Ascending aorta (tissue), 2 donors: ENCODE measurements at regions of chr4 and their contacts with region 1.

Region 1: GRCh38 chr4:16034010-16034829 is 49.6 kb downstream of the PROM1 start:
- DNase-seq: no peak
- H3K4me3 ChIP-seq: peak overlapping the region in 1 of 2 donors; percentile 32
- H3K27ac ChIP-seq: peak overlapping the region; percentile 67 to 84
- H3K4me1 ChIP-seq: peaks cover 0 to 6% of the 10 kb centered on the region in 2 donors
- H3K27me3 ChIP-seq: no peaks in the 10 kb centered on the region
- CTCF ChIP-seq: no peak

Region 2: GRCh38 chr4:16056681-16057385 is 22.6 kb after region 1 on chr4:
- intact Hi-C with region 1: loop called (anchors 2 kb)
- DNase-seq: peak in 1 of 2 donors; percentile 71
- H3K4me3 ChIP-seq: peak overlapping the region in 1 of 2 donors; percentile 18
- H3K27ac ChIP-seq: peak overlapping the region; percentile 61 to 70
- H3K4me1 ChIP-seq: peaks cover 4 to 28% of the 10 kb centered on the region in 2 donors
- H3K27me3 ChIP-seq: no peaks in the 10 kb centered on the region
- CTCF ChIP-seq: no peak